Sigmoid colon (tissue), 7 donors: ENCODE measurements at regions of chr1 and their contacts with region 1.

Region 1: DNA sequence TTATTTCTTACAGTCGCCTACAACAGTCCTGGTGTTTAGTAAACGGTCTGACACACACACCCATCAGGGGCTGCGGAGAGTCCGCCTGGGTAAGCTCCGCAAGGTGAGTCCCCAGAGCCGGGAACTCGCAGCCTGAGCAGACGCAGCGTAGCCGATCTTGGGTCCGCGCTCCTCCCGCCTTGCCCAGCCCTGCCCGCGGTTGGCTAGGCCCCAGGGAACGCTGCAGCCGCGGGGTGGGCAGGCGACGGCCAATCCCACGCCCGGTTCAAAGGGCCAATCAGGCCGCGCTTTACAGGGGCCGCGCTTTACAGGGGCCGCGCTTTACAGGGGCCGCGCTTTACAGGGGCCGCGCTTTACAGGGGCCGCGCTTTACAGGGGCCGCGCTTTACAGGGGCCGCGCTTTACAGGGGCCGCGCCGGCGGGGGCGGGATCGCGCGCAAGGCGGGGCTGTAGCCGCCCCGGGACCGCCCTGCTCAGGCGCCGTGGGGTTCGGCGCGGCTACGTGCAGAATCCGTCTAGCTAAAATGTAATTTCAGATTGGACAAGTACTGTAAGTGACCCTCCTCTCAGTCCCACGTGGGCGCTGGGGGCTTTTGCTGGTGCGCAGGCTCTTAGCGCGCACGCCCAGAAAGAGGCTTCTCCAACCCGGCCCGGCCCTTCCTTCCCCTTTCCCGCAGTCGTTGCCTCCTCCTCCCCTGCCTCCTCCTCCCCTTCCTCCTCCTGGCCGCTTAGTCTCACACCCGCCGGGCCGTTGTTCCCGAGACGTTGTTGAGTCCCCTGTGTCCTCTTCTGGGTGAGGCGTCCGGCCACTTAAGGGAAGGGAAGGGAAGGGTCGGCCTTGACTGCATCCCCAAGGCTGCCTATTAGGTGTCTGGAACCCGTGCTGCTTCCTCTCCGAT is at the start of gene FGGY:
- DNase-seq: peak; percentile 99
- H3K4me3 ChIP-seq: peak within 1 kb of the TSS; percentile 45 to 61 (median 50)
- H3K27ac ChIP-seq: peak within 1 kb of the TSS; percentile 90 to 98 (median 94)
- H3K4me1 ChIP-seq: peaks cover 0 to 20% (median 15%) of the 10 kb centered on the region in 4 donors
- H3K27me3 ChIP-seq: no peaks in the 10 kb centered on the region
- CTCF ChIP-seq: no peak
- EP300 ChIP-seq: peak in 2 of 4 donors; percentile 40 to 63
- POLR2A ChIP-seq: peak; percentile 91
- total RNA-seq, gene FGGY: 20.5 to 54.1 (median 33.9) TPM

Region 2: DNA sequence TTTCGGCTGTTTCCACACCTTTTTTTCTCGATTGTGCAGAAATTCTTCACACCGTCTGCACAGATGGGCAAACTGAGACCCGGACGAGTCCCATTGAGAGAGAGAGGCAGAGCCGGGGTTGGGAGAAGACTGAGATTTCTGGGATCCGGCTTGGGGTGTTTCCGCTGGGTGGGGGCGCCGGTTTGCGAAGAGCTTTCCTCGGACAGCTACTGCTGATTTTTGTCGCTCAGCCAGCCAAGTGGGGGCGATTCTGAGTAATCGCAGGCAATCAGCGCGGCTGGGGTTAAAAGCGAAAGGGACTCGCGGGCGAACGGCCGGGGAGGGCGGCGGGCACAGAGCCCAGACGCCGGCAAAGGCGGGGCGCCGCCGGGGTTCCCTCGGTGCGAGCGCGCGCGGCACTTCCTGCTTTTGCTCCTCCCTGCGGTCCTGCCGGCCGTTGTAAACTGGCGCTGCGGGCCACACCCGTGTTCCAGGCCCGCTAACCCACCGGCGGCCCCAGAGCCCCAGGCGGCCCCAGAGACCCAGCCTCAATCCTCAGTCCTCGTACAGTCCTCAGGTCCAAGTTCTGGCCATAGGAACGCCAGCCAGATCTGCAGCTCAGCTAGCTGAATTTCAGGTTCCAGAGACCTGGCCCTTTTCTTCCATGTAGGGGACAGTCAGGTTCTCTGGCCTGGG is 480.4 kb before region 1 on chr1:
- intact Hi-C with region 1: loop called (anchors 1 kb)
- DNase-seq: peak; percentile 96
- H3K4me3 ChIP-seq: peak overlapping the region; percentile 42 to 66 (median 56)
- H3K27ac ChIP-seq: peak overlapping the region; percentile 84 to 94 (median 90)
- H3K4me1 ChIP-seq: peaks cover 0 to 24% (median 15%) of the 10 kb centered on the region in 4 donors
- H3K27me3 ChIP-seq: no peaks in the 10 kb centered on the region
- CTCF ChIP-seq: no peak
- EP300 ChIP-seq: no peak
- POLR2A ChIP-seq: peak; percentile 56 to 64

Region 3: GRCh38 chr1:59150577-59151391 is 145.8 kb before region 1 on chr1:
- intact Hi-C with region 1: loop called (anchors 5 kb)
- DNase-seq: peak; percentile 96
- H3K4me3 ChIP-seq: peak overlapping the region in 2 of 4 donors; percentile 24 to 30
- H3K27ac ChIP-seq: peak overlapping the region; percentile 77 to 87 (median 82)
- H3K4me1 ChIP-seq: peaks cover 0 to 35% (median 29%) of the 10 kb centered on the region in 4 donors
- H3K27me3 ChIP-seq: no peaks in the 10 kb centered on the region
- CTCF ChIP-seq: no peak
- EP300 ChIP-seq: peak; percentile 23 to 87 (median 79)
- POLR2A ChIP-seq: no peak

Region 4: GRCh38 chr1:59446257-59446901 is 149.8 kb after region 1 on chr1:
- intact Hi-C with region 1: loop called (anchors 2 kb)
- DNase-seq: peak; percentile 89
- H3K4me3 ChIP-seq: no peak overlapping the region
- H3K27ac ChIP-seq: peak overlapping the region; percentile 68 to 85 (median 80)
- H3K4me1 ChIP-seq: peaks cover 0 to 62% (median 48%) of the 10 kb centered on the region in 4 donors
- H3K27me3 ChIP-seq: no peaks in the 10 kb centered on the region
- CTCF ChIP-seq: no peak
- EP300 ChIP-seq: peak; percentile 41 to 93 (median 81)
- POLR2A ChIP-seq: no peak

Region 5: DNA sequence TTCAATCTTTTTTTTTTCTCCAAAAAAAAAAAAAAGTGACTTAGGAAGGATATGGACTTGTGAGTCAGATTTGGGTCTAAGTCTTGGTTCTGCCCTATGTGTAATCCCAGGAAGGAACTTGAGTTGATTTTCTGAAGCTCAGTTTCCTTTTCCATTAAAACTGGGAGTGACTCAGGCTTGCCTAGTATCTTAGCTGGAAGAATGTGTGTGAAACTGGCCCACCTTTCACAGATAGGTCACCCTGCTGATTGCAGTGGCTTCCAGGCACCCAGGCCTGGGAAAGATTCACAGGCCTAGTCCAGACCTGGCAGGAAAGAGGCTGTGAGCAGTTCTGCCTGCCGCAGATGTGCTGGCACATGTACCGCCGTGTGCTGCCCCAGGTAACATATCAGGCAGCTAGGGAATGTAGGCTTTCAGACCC is 299.8 kb after region 1 on chr1:
- intact Hi-C with region 1: loop called (anchors 5 kb)
- DNase-seq: no peak
- H3K4me3 ChIP-seq: no peak overlapping the region
- H3K27ac ChIP-seq: peak overlapping the region; percentile 82 to 87 (median 82)
- H3K4me1 ChIP-seq: peaks cover 0 to 81% (median 61%) of the 10 kb centered on the region in 4 donors
- H3K27me3 ChIP-seq: no peaks in the 10 kb centered on the region
- CTCF ChIP-seq: no peak
- EP300 ChIP-seq: no peak
- POLR2A ChIP-seq: no peak

Region 6: DNA sequence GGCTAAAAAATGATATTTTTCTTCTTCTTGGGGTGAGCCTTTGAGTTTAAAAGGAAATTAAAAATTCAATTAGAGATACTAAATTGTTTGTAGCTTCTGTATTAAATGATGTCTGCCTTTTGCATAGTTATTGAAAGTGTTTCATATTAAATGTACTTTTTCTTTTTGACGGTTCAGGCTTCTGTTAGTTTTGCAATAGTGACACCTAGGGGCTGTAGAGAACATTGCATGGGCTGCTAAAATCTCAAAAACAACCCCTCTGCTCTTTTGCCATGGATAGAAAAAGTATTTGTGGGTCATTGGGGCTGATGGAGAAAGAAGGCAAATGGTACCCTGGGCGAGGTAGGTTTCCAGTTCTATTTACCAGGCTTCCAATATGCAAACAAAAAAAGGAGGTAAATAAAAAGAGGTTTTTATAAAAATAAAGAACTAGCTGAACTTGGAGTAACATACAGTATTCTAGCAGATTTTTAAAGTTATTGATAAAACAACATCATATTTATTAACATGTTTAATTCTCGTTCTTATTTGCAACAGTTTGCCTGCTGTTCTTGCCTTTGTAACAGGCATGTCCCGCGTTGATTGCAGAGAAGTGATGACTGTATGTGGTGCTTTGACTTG is 402.7 kb after region 1 on chr1:
- intact Hi-C with region 1: loop called (anchors 5 kb)
- DNase-seq: no peak
- H3K4me3 ChIP-seq: no peak overlapping the region
- H3K27ac ChIP-seq: peak overlapping the region in 3 of 4 donors; percentile 24 to 56 (median 51)
- H3K4me1 ChIP-seq: peaks cover 0 to 64% (median 44%) of the 10 kb centered on the region in 4 donors
- H3K27me3 ChIP-seq: no peaks in the 10 kb centered on the region
- CTCF ChIP-seq: peak; percentile 84 to 96 (median 96)
- EP300 ChIP-seq: no peak
- POLR2A ChIP-seq: no peak